Left ventricle myocardium inferior (tissue), 1 donor: ENCODE measurements at regions of chr1 and their contacts with region 1.

Region 1: GRCh38 chr1:219812491-219813203 is 115.7 kb downstream of the SLC30A10 start:
- DNase-seq: no peak
- H3K4me3 ChIP-seq: no peak overlapping the region
- H3K27ac ChIP-seq: no peak overlapping the region
- H3K4me1 ChIP-seq: peaks cover 13% of the 10 kb centered on the region
- H3K27me3 ChIP-seq: peaks cover 11% of the 10 kb centered on the region
- CTCF ChIP-seq: peak; percentile 90

Region 2: DNA sequence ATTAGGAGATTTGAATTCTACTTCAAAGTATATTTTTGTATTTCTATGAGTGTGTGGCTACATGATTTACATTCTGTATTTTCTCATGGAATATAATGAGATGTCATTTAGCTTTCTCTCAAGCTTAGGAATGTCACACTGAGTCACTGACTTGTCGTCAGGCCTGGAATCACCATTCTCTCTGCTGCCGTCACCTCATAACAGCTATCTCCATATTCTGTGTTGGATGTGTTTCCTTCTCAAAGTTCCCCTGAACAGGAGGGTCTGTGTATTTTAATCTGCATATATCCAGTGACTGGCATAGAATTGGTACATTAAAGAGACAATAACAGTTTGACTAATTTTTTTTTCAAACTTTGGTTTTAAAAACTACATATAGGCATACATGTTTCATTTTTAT is 603.1 kb before region 1 on chr1:
- intact Hi-C with region 1: loop called (anchors 10 kb)
- DNase-seq: no peak
- H3K4me3 ChIP-seq: no peak overlapping the region
- H3K27ac ChIP-seq: no peak overlapping the region
- H3K4me1 ChIP-seq: peaks cover 1% of the 10 kb centered on the region
- H3K27me3 ChIP-seq: no peaks in the 10 kb centered on the region
- CTCF ChIP-seq: no peak